Activated T-helper 1 cell treated with anti-CD3 and anti-CD28 coated beads, Interleukin-12 subunit alpha, Interleukin-12 subunit beta, Interleukin-2, Interleukin-4 antibody, amounts not matched to agents 30 ng/mL and 10 ng/mL and 1 ng/mL, durations not matched to agents 14 hours and 24 hours and 36 hours (primary cell): ENCODE measurements at regions of chr6 and their contacts with region 1.

Region 1: GRCh38 chr6:18115356-18115755 is 7.1 kb downstream of the NHLRC1 start:
- DNase-seq: peak; percentile 7
- H3K4me3 Mint-ChIP-seq: peak overlapping the region; percentile 7
- H3K27ac Mint-ChIP-seq: peak overlapping the region; percentile 33
- H3K4me1 Mint-ChIP-seq: peaks cover 11% of the 10 kb centered on the region
- H3K27me3 Mint-ChIP-seq: peaks cover 64% of the 10 kb centered on the region

Region 2: GRCh38 chr6:17831135-17831534 is 284.2 kb before region 1 on chr6:
- intact Hi-C with region 1: no loop called
- DNase-seq: no peak
- H3K4me3 Mint-ChIP-seq: no peak overlapping the region
- H3K27ac Mint-ChIP-seq: no peak overlapping the region
- H3K4me1 Mint-ChIP-seq: no peaks in the 10 kb centered on the region
- H3K27me3 Mint-ChIP-seq: peaks cover 13% of the 10 kb centered on the region

Region 3: DNA sequence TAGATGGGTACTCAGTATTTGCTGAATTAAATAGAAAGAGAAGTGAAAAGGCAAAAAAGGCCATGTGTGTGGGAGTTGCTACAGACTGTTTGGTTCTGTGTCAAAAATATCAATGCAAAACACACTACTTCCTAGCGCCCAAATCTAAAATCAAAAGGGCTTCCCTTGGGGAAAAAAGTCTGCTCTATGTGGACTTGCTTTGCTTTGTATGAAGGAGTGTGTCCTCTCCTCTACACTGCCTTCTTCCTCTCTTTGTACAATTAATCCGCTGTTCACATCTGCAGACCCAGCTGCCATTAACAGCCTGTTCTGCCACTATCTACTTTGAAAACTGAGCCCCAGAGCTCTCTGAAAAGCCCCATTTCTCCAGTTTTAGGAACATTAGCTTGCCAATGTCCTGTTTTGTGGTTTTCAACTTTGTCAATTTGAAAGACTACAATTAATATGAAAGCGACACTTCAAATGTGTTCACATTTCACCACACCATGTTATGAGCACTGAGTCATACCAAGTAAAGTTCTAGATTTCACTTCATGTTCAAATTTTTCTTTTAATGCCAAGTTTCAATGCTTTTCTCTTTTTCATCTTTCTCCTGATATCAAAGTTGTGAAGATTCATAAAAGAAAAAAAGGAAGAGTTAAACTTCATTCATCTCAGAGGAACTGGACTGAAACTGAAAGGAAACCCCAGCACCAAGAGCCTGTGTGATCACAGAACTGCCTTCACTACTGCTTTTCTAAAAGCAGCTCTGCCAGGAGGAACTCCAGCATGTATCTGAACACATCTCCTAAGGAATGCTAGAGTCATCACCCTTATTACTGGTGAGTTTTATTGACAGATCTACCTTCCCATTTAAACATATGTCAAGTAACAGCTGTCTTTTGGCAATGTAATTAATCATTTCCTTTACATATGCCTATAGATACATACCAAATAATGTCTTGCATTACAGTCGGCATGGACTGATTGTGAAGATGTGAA is 230.6 kb before region 1 on chr6:
- intact Hi-C with region 1: loop called (anchors 10 kb)
- DNase-seq: no peak
- H3K4me3 Mint-ChIP-seq: no peak overlapping the region
- H3K27ac Mint-ChIP-seq: no peak overlapping the region
- H3K4me1 Mint-ChIP-seq: peaks cover 16% of the 10 kb centered on the region
- H3K27me3 Mint-ChIP-seq: peaks cover 18% of the 10 kb centered on the region

Region 4: DNA sequence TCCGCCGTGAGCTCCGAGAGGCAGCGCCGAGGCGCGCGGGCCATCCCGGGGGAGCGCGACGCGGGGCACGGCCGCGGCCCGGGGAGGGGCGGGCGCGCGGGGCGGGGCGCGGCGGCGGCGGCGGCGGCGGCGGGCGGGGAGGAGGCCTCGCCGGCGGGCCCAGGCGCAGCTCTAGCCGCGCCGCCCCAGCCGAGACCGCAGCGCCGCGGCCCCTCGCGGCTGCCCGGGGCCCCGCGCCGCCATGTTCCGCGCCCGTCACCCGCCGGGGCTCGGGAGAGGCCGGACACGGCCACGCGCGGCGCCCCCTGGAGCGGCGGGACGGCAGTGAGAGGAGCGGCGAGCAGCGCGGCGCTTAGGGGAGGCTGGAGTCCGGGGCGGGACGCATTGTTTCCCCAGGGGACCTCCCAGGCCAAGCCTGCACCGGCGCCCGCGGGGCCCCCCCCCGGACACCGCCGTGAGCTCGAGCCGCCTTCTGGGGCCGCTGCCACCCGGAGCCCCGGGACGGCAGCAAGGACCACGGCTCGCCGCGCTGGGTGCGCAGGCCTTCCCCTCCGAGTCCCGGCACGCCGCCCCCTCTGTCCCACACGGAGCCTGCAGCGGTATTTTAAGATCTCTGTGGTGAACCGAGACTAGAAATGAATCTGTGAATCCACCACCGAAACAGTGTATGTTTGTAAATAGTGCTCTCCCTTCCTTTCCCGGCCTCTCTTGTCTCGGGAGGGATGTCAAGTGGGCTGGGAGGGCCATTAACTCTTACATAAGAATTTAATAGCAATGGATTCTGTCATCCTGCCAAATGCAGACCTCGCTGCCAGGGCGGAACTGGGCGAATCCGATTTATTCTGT is 127.6 kb before region 1 on chr6 and contains the start of gene KIF13A:
- intact Hi-C with region 1: loop called (anchors 1 kb)
- DNase-seq: peak; percentile 5
- H3K4me3 Mint-ChIP-seq: peak within 1 kb of the TSS; percentile 85
- H3K27ac Mint-ChIP-seq: no peak within 1 kb of the TSS
- H3K4me1 Mint-ChIP-seq: peaks cover 9% of the 10 kb centered on the region
- H3K27me3 Mint-ChIP-seq: peaks cover 64% of the 10 kb centered on the region
- total RNA-seq, gene KIF13A: not detected in 2 replicates

Region 5: DNA sequence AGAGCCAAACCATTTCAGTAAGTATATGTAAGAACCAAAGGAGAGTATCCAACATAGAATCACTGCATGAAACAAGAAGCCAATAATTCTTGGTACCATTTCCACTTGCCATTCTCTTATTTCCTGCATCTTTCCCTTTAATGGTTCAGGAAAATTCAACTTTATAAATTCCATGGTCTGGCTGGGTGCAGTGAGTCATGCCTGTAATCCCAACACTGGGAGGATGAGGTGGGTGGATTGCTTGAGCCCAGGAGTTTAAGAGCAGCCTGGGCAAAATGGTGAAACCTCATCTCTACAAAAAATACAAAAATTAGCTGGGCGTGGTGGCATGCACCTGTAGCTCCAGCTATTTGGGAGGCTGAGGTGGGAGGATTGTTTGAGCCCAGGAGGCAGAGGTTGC is 14.1 kb before region 1 on chr6:
- intact Hi-C with region 1: no loop called
- DNase-seq: no peak
- H3K4me3 Mint-ChIP-seq: no peak overlapping the region
- H3K27ac Mint-ChIP-seq: no peak overlapping the region
- H3K4me1 Mint-ChIP-seq: peaks cover 5% of the 10 kb centered on the region
- H3K27me3 Mint-ChIP-seq: peaks cover 23% of the 10 kb centered on the region

Region 6: GRCh38 chr6:18155150-18155863 is 40.0 kb after region 1 on chr6 and contains the start of gene KDM1B:
- intact Hi-C with region 1: loop called (anchors 1 kb)
- DNase-seq: peak; percentile 99
- H3K4me3 Mint-ChIP-seq: peak within 1 kb of the TSS; percentile 92
- H3K27ac Mint-ChIP-seq: peak within 1 kb of the TSS; percentile 92
- H3K4me1 Mint-ChIP-seq: peaks cover 24% of the 10 kb centered on the region
- H3K27me3 Mint-ChIP-seq: peaks cover 9% of the 10 kb centered on the region
- total RNA-seq, gene KDM1B: 7.1 and 7.2 TPM in 2 replicates

Region 7: GRCh38 chr6:18473755-18474154 is 358.4 kb after region 1 on chr6:
- intact Hi-C with region 1: no loop called
- DNase-seq: no peak
- H3K4me3 Mint-ChIP-seq: no peak overlapping the region
- H3K27ac Mint-ChIP-seq: no peak overlapping the region
- H3K4me1 Mint-ChIP-seq: no peaks in the 10 kb centered on the region
- H3K27me3 Mint-ChIP-seq: peaks cover 8% of the 10 kb centered on the region